PC-3 (cell line): ENCODE measurements at regions of chr11 and their contacts with region 1.

Region 1: DNA sequence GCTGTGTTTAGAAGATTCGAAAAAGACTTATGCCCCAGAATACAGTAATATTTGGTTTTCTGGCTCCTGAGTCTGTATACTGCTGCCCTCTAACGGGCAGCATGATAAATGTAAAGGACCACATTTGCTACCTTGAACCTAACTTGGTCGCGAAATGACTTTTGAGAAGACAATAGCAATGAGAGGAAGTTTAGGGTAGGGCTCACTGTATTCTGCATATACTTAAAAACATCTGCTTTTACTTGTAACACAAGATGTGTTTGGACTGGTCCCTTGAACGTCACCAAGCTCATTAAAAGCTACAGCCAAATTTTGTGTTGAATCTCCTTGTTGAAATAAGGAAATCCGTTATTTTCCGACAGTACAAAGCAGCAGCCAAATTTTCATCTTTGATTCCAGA is 309.1 kb downstream of the SWAP70 start:
- DNase-seq: peak; percentile 72
- ATAC-seq: peak; percentile 58
- H3K4me3 ChIP-seq: no peak overlapping the region
- H3K27ac ChIP-seq: no peak overlapping the region
- H3K4me1 ChIP-seq: peaks cover 17% of the 10 kb centered on the region
- H3K27me3 ChIP-seq: no peaks in the 10 kb centered on the region
- CTCF ChIP-seq: peak; percentile 89

Region 2: GRCh38 chr11:9489080-9489765 is 483.8 kb before region 1 on chr11:
- CTCF ChIA-PET with region 1: no interaction called
- POLR2A ChIA-PET with region 1: interaction called, 18 read pairs
- intact Hi-C with region 1: no loop called
- DNase-seq: peak; percentile 36
- ATAC-seq: peak; percentile 42
- H3K4me3 ChIP-seq: no peak overlapping the region
- H3K27ac ChIP-seq: no peak overlapping the region
- H3K4me1 ChIP-seq: 0 out of 2 replicates have a peak, but pooled peaks cover 9% of the 10 kb centered on the region
- H3K27me3 ChIP-seq: no peaks in the 10 kb centered on the region
- CTCF ChIP-seq: no peak

Region 3: DNA sequence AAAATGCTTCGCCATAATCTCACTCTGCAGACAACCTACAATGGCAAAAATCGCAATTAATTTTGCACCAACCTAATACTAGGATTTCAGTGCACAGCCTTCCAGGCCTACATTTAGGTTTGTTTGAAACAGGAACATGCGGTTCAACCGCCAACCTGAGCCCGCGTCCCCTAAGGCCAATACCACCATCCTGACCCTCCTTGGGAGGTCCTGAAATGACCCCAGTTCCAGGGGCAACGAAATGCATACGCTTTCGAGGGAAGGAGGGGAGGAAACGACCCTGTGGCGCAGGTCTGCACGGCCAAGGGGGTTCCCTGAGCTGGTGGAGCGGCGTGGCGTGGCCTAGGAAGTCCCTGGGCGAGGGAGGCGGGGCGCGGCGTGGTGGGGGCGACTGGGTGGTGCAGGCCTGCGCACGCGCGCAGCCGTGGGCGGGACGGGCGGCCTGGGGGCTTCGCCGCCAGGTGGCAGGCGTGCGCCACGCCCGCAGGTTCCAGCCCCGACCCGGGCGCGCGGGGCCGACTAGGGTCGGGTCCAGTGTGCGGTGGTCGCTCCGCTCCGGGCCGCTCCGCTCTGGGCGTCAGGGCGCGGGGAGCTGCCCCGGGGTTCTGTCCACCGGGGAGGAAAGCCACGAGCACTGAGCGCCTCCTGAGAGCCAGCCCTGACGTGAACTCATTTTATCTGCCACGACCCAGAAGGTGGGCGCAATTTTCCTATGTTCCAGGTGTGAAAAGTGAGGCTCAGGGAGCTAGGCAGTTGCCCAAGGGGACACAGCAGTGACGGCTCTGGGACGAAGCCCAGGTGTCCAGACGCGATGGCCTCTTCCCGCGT is 215.0 kb before region 1 on chr11:
- CTCF ChIA-PET with region 1: interaction called, 8 read pairs
- POLR2A ChIA-PET with region 1: no interaction called
- intact Hi-C with region 1: loop called (anchors 1 kb)
- DNase-seq: peak; percentile 76
- ATAC-seq: peak; percentile 39
- H3K4me3 ChIP-seq: peak overlapping the region; percentile 87
- H3K27ac ChIP-seq: peak overlapping the region; percentile 17; the same call in 1 of the 2 replicates
- H3K4me1 ChIP-seq: peaks cover 42% of the 10 kb centered on the region
- H3K27me3 ChIP-seq: no peaks in the 10 kb centered on the region
- CTCF ChIP-seq: peak; percentile 66

Region 4: DNA sequence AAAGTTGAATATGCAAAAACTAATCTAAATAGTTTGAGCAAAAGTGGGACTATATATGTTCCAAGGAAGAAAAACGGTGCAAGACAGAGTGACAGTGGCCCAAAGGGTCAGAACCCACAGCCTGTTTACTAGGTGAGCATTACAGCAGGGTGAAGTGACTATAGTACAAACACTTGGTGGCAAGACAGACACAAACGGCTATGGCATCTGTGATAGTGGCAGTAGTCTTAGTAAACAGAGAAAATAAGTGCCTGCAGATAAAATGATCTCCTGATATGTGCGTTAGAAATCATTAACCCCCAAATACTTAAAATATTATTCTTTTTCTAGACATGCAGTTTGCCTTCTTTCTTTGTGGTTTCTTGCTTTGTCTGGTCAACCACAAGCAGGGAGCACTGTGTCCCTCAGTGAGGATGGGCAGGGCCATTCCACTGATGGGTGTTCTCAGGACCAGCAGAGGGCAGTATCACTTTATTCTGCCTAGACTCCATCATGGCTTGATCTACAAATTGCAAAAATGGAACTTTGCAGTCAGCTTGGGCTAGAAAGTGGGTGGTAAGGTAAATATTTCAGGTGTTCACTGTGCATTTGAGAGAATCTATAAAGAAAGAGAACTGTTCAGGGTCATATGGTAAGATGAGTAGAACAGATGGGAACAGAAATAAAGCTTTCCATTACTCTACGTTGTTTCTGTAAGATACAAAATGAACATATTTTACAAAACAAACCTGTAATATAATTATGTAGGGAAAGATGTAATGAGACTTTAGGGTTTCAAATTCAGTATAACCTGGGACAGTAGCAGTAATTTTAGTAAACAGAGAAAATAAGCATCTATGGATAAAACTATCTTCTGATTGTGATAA is 110.9 kb before region 1 on chr11:
- CTCF ChIA-PET with region 1: interaction called, 3 read pairs
- POLR2A ChIA-PET with region 1: no interaction called
- intact Hi-C with region 1: loop called (anchors 1 kb)
- DNase-seq: peak; percentile 83
- ATAC-seq: peak; percentile 94
- H3K4me3 ChIP-seq: no peak overlapping the region
- H3K27ac ChIP-seq: no peak overlapping the region
- H3K4me1 ChIP-seq: peaks cover 19% of the 10 kb centered on the region
- H3K27me3 ChIP-seq: no peaks in the 10 kb centered on the region
- CTCF ChIP-seq: peak; percentile 90

Region 5: DNA sequence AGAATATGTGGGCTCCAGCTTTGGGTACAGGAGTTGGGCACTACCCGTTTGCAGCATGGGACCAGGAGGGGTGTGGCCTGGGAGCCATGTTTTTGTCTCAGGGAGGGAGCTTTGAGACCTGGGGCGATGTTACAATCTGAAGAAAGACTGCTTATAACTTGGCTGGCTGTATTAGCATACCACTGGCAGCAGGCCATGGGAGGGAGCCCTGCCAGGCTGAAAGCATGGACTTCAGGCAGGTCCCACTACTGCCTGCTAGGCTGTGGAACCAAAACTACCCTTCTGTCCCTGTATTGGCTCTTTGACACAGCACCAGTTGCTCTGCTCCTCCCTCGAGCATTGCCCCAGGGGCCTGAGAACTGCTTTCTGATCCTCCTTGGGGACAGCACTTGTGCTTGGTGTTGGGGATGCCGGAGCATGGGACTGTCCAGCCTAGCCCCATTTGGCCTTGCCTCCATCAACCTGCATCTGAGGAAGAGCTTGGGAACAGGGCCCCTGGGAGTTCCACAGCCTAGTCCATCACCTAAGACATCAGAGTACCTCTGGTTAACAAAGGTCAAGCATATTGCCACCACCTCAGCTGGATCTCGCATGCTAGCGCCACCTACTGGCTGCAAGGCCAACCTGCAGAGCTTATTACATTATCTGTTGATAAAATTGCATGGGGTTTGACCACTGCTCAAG is 103.6 kb after region 1 on chr11:
- CTCF ChIA-PET with region 1: no interaction called
- POLR2A ChIA-PET with region 1: no interaction called
- intact Hi-C with region 1: no loop called
- DNase-seq: peak; percentile 59
- ATAC-seq: peak; percentile 42
- H3K4me3 ChIP-seq: no peak overlapping the region
- H3K27ac ChIP-seq: no peak overlapping the region
- H3K4me1 ChIP-seq: no peaks in the 10 kb centered on the region
- H3K27me3 ChIP-seq: no peaks in the 10 kb centered on the region
- CTCF ChIP-seq: peak; percentile 75

Region 6: GRCh38 chr11:10091314-10092045 is 118.5 kb after region 1 on chr11:
- CTCF ChIA-PET with region 1: no interaction called
- POLR2A ChIA-PET with region 1: no interaction called
- intact Hi-C with region 1: no loop called
- DNase-seq: peak; percentile 55
- ATAC-seq: peak; percentile 70
- H3K4me3 ChIP-seq: no peak overlapping the region
- H3K27ac ChIP-seq: 0 out of 2 replicates have a peak overlapping the region, but pooled peaks have one; percentile 1
- H3K4me1 ChIP-seq: peaks cover 28% of the 10 kb centered on the region
- H3K27me3 ChIP-seq: no peaks in the 10 kb centered on the region
- CTCF ChIP-seq: no peak